ENCODE measurements at regions of chr5 and their contacts with region 1.

Region 1: DNA sequence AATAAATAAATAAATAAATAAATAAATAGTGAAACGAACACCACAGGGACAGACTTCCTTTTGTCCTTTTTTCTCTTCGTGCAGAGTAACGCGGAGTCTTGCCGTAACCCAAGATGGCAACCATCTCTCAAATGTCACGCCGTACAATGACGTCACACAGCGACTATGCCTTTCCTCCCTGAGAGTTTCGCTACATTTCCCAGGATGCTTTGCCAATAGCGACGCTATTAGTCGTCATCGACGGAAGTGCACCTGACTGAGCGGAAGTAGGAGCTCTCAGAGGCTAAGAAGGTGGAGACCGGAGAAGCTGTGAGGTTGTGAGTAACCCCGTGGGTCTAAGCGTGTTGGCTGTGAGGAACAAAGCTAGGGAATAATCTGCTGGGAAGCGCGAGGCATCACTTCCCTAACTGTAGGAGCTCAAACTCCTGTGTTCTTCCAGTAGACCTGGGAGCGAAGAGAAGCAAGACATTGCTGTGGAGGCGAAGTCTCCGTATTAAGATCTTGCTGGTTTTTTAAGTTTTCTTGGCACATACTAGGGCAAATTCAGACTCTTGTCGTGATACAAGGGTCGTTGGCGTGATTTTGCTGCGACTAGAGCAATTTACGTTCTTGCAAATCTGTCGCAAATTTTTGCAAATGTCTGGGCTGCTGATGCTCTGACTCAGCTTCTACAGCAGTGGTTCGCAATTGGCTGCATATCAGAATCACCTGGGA is at the start of gene TTC1:
- DNase-seq: peak; percentile 90
- H3K4me3 ChIP-seq: peak within 1 kb of the TSS; percentile 97
- H3K27me3 ChIP-seq: no peaks in the 10 kb centered on the region
- CTCF ChIP-seq: no peak
- polyA plus RNA-seq, gene TTC1: 23.2 and 37.4 TPM in 2 replicates

Region 2: GRCh38 chr5:159324102-159324760 is 684.8 kb before region 1 on chr5:
- CTCF ChIA-PET with region 1: no interaction called
- POLR2A ChIA-PET with region 1: interaction called, 10 read pairs
- DNase-seq: peak; percentile 48
- H3K4me3 ChIP-seq: no peak overlapping the region
- H3K27me3 ChIP-seq: no peaks in the 10 kb centered on the region; the same call in 1 of the 2 replicates
- CTCF ChIP-seq: no peak

Region 3: GRCh38 chr5:159995907-159996306 is 13.1 kb before region 1 on chr5:
- CTCF ChIA-PET with region 1: no interaction called
- POLR2A ChIA-PET with region 1: interaction called, 12 read pairs
- DNase-seq: no peak
- H3K4me3 ChIP-seq: no peak overlapping the region
- H3K27me3 ChIP-seq: peaks cover 8% of the 10 kb centered on the region
- CTCF ChIP-seq: no peak

Region 4: GRCh38 chr5:160021831-160022446 is 12.9 kb after region 1 on chr5:
- CTCF ChIA-PET with region 1: interaction called, 39 read pairs
- POLR2A ChIA-PET with region 1: no interaction called
- DNase-seq: no peak
- H3K4me3 ChIP-seq: no peak overlapping the region
- H3K27me3 ChIP-seq: no peaks in the 10 kb centered on the region
- CTCF ChIP-seq: peak; percentile 69

Region 5: DNA sequence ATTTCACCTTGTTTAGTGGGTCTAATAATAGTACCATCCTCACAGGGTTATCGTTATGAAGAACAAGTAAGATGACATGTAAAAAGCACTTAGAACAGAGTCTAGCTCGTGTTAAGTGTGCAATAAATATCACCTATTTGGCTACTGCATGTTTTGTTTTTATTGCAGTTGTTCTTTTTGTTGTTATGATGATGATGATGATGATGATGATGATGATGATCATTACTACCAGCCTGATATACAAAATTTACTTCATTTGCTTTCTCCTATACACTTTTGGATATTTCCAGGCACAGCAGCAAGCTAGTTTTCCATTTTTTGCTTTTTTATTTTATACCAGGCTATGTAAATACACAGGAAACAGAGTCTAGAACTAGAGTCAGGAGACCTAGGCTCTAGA is 1005.7 kb after region 1 on chr5:
- CTCF ChIA-PET with region 1: no interaction called
- POLR2A ChIA-PET with region 1: no interaction called
- DNase-seq: no peak
- H3K4me3 ChIP-seq: no peak overlapping the region
- H3K27me3 ChIP-seq: no peaks in the 10 kb centered on the region
- CTCF ChIP-seq: no peak

Measured in BJ (cell line).